K562 (cell line): ENCODE measurements at regions of chr2 and their contacts with region 1.

Region 1: GRCh38 chr2:180001726-180002125 is 5.4 kb downstream of the CWC22 start:
- DNase-seq: no peak
- ATAC-seq: no peak
- H3K4me3 ChIP-seq: no peak overlapping the region
- H3K27ac ChIP-seq: no peak overlapping the region
- H3K4me1 ChIP-seq: peaks cover 0 to 23% of the 10 kb centered on the region in 2 experiments; a peak in 4 of 5 replicates
- H3K27me3 ChIP-seq: no peaks in the 10 kb centered on the region
- CTCF ChIP-seq: no peak
- EP300 ChIP-seq: no peak
- POLR2A ChIP-seq: no peak
- RAD21 ChIP-seq: no peak

Region 2: GRCh38 chr2:179981085-179981484 is 20.6 kb before region 1 on chr2:
- CTCF ChIA-PET with region 1: no interaction called
- POLR2A ChIA-PET with region 1: no interaction called
- in situ Hi-C with region 1: no loop called
- intact Hi-C with region 1: loop called (anchors 1 kb)
- DNase-seq: no peak
- ATAC-seq: no peak
- H3K4me3 ChIP-seq: no peak overlapping the region
- H3K27ac ChIP-seq: no peak overlapping the region
- H3K4me1 ChIP-seq: no peaks in the 10 kb centered on the region
- H3K27me3 ChIP-seq: no peaks in the 10 kb centered on the region
- CTCF ChIP-seq: no peak
- EP300 ChIP-seq: no peak
- POLR2A ChIP-seq: no peak
- RAD21 ChIP-seq: no peak

Region 3: DNA sequence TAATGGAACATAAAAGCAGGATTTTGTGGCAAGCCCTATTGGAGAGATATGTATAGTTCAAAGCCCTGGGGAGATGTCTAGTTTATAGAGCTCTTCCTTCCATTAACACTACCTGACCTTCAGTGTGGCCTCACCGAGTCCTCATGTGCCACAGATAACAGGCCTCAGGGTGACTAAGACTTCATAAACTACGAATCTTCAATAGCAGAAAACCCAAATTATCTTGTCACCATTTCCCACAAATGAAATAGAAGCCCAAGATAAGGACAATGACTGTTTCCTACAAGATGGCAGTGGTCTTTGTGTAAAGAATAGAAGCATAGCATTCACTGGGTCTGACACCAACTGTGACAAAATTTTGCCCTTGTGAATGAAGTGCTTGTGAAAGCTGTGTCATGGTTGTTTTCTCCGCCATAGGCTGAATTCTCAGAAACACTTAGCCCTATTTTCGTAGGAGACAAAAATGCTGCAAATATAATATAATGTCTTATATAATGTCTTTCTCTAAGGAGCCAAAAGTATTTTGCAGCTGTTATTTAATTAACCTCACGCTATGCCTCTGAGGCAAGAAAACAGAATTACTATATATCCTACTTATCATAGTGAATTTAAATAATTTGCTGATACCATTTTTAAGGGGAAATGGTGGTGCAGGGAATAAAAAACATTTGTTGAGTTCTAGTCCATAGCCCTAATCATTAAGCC is 142.1 kb after region 1 on chr2:
- CTCF ChIA-PET with region 1: no interaction called
- POLR2A ChIA-PET with region 1: no interaction called
- in situ Hi-C with region 1: no loop called
- intact Hi-C with region 1: no loop called
- DNase-seq: peak in 1 of 4 experiments; percentile 18
- ATAC-seq: peak; percentile 47; the same call in 1 of the 3 replicates
- H3K4me3 ChIP-seq: no peak overlapping the region
- H3K27ac ChIP-seq: peak overlapping the region; percentile 4; the same call in 1 of the 3 replicates
- H3K4me1 ChIP-seq: no peaks in the 10 kb centered on the region
- H3K27me3 ChIP-seq: no peaks in the 10 kb centered on the region
- CTCF ChIP-seq: no peak
- EP300 ChIP-seq: no peak
- POLR2A ChIP-seq: no peak
- RAD21 ChIP-seq: no peak